Activated CD4-positive, alpha-beta memory T cell treated with anti-CD3 and anti-CD28 coated beads, Interleukin-2, amount 10 ng/mL, durations not matched to agents 7 days and 5 days (primary cell): ENCODE measurements at regions of chr13 and their contacts with region 1.

Region 1: DNA sequence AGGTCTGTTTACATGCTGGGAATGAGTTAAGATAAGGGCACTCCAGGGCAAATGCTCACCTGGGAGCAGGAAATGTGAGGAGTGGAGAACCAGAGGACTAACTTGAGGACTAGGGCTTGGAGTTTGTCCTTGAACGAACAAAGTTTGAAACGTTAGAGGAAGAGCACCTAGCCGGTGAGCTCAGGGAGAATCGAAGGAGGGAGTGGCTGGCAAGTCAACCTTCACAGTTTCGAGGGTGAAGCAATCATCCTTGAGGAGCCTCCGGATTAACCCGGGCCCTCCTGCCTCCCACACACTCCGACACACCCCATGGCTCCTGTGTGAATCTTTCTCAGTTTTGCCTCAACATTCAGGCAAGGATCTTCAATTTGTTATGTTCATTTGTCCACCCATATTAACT is 58.6 kb downstream of the LMO7 start:
- DNase-seq: no peak
- H3K4me3 Mint-ChIP-seq: no peak overlapping the region
- H3K27ac Mint-ChIP-seq: no peak overlapping the region
- H3K4me1 Mint-ChIP-seq: no peaks in the 10 kb centered on the region
- H3K27me3 Mint-ChIP-seq: no peaks in the 10 kb centered on the region

Region 2: DNA sequence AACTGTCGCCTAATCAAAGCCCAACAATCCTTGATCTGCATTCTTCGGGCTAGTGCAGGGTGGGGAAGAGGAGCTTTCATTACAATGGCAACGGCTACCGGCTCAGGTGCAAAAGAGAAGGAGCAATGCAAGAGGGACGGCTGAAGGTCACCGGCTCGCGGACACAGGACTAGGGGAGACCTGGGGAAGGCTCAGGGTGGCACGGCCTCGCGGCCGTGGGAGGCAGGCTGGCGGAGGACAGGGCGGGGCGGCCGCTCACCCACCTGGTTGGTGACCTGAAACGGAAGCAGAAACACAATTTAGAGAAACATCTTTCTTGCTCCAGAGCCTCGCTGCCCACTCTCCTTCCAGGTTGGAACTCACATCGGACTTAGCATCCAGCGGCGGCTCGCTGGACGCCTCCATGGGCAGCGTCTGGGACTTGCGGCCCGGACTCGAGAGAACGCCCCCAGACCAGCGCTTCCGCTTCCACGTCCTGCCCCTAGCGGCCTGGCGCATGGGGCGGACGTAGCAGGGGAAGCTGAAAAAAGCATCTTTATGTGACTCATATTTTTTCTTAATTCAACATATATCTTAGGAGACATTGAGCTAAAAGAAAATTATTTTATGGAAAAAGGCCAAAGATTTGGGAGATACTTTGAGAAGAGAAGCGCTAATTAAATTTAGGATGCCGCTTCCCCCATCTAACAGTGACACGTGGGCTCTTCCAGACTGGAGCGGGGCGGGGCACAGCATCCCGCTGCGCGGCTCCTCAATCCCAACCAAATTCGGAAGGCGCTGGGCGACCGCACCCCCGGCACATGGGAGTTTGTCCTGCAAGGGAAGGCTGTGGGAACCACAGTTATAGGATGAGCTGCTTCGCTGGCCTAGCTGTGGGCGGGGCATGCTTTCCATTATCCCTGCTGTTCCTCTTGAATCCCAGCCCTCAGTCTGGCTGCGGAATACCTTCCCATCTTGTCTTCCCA is 157.0 kb before region 1 on chr13 and contains the start of gene COMMD6:
- CTCF ChIA-PET with region 1: no interaction called
- POLR2A ChIA-PET with region 1: no interaction called
- DNase-seq: peak; percentile 75
- H3K4me3 Mint-ChIP-seq: peak within 1 kb of the TSS; percentile 99
- H3K27ac Mint-ChIP-seq: peak within 1 kb of the TSS; percentile 89
- H3K4me1 Mint-ChIP-seq: peaks cover 34% of the 10 kb centered on the region
- H3K27me3 Mint-ChIP-seq: no peaks in the 10 kb centered on the region
- total RNA-seq, gene COMMD6: 128 TPM

Region 3: GRCh38 chr13:75675421-75675820 is 19.3 kb before region 1 on chr13:
- CTCF ChIA-PET with region 1: interaction called, 15 read pairs
- POLR2A ChIA-PET with region 1: no interaction called
- DNase-seq: no peak
- H3K4me3 Mint-ChIP-seq: no peak overlapping the region
- H3K27ac Mint-ChIP-seq: no peak overlapping the region
- H3K4me1 Mint-ChIP-seq: no peaks in the 10 kb centered on the region
- H3K27me3 Mint-ChIP-seq: no peaks in the 10 kb centered on the region

Region 4: GRCh38 chr13:75704579-75705320 is 10.0 kb after region 1 on chr13:
- CTCF ChIA-PET with region 1: interaction called, 15 read pairs
- POLR2A ChIA-PET with region 1: no interaction called
- DNase-seq: no peak
- H3K4me3 Mint-ChIP-seq: no peak overlapping the region
- H3K27ac Mint-ChIP-seq: no peak overlapping the region
- H3K4me1 Mint-ChIP-seq: peaks cover 12% of the 10 kb centered on the region
- H3K27me3 Mint-ChIP-seq: no peaks in the 10 kb centered on the region

Region 5: DNA sequence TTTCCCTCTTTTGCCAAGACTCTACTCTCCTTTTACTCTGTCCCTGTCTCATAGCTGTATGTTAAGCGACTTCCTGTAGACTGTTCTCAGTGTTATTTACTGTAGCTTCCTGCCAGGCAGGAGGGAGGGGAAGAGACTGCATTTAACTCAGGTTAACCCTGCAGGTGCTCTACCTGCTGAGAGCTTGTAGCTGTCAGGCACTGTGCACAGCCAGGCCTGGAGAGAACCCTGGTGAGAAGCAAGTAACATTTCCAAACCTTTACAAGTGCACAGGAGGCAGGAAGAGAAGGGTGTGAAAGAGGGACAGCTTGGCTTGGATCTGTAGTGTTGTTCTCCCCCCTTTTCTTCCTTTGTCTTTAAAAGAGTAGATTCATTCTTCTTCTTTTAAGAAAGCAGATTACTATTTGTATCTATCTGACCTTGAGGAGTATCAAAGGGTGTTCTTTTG is 108.5 kb after region 1 on chr13:
- CTCF ChIA-PET with region 1: interaction called, 11 read pairs
- POLR2A ChIA-PET with region 1: no interaction called
- DNase-seq: peak; percentile 17
- H3K4me3 Mint-ChIP-seq: no peak overlapping the region
- H3K27ac Mint-ChIP-seq: no peak overlapping the region
- H3K4me1 Mint-ChIP-seq: peaks cover 41% of the 10 kb centered on the region
- H3K27me3 Mint-ChIP-seq: no peaks in the 10 kb centered on the region

Region 6: GRCh38 chr13:75870397-75870903 is 175.7 kb after region 1 on chr13:
- CTCF ChIA-PET with region 1: interaction called, 38 read pairs
- POLR2A ChIA-PET with region 1: no interaction called
- DNase-seq: peak; percentile 17
- H3K4me3 Mint-ChIP-seq: peak overlapping the region; percentile 52
- H3K27ac Mint-ChIP-seq: peak overlapping the region; percentile 71
- H3K4me1 Mint-ChIP-seq: peaks cover 22% of the 10 kb centered on the region
- H3K27me3 Mint-ChIP-seq: peaks cover 9% of the 10 kb centered on the region

Region 7: GRCh38 chr13:75876360-75877050 is 181.8 kb after region 1 on chr13:
- CTCF ChIA-PET with region 1: interaction called, 38 read pairs
- POLR2A ChIA-PET with region 1: no interaction called
- DNase-seq: peak; percentile 62
- H3K4me3 Mint-ChIP-seq: peak overlapping the region; percentile 14
- H3K27ac Mint-ChIP-seq: no peak overlapping the region
- H3K4me1 Mint-ChIP-seq: peaks cover 15% of the 10 kb centered on the region
- H3K27me3 Mint-ChIP-seq: peaks cover 7% of the 10 kb centered on the region

Region 8: GRCh38 chr13:76473552-76474134 is 778.9 kb after region 1 on chr13:
- CTCF ChIA-PET with region 1: interaction called, 14 read pairs
- POLR2A ChIA-PET with region 1: no interaction called
- DNase-seq: peak; percentile 70
- H3K4me3 Mint-ChIP-seq: no peak overlapping the region
- H3K27ac Mint-ChIP-seq: no peak overlapping the region
- H3K4me1 Mint-ChIP-seq: no peaks in the 10 kb centered on the region
- H3K27me3 Mint-ChIP-seq: peaks cover 3% of the 10 kb centered on the region